ENCODE measurements at regions of chr9 and their contacts with region 1.

Region 1: GRCh38 chr9:99140685-99141314 is 35.9 kb downstream of the TGFBR1 start:
- DNase-seq: peak; percentile 36
- H3K4me3 ChIP-seq: no peak overlapping the region
- H3K27ac ChIP-seq: no peak overlapping the region
- H3K4me1 ChIP-seq: no peaks in the 10 kb centered on the region
- H3K27me3 ChIP-seq: no peaks in the 10 kb centered on the region
- CTCF ChIP-seq: peak; percentile 61 to 83 (median 72)
- POLR2A ChIP-seq: no peak

Region 2: DNA sequence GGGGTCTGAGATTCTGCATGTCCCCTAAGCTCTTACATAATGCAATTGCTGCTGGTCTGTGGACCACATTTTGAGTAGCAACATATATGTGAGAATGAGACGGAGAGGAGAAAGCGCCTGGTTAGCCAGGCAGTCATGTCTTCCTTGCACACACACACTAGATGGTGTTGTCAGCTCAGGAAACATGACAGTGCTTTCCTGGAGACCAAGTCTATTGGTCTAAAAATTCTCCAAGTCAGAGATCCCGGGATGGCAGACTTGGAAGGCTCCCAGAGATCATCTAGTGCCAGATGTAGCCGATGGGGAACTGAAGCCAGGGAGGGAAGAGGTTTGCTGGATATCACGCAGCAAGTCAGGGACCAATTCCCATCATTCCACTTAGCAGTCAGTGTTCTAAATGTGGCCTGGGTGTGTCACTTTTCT is 279.9 kb before region 1 on chr9:
- intact Hi-C with region 1: loop called (anchors 5 kb)
- DNase-seq: no peak
- H3K4me3 ChIP-seq: no peak overlapping the region
- H3K27ac ChIP-seq: peak overlapping the region in 1 of 2 donors; percentile 5
- H3K4me1 ChIP-seq: no peaks in the 10 kb centered on the region
- H3K27me3 ChIP-seq: no peaks in the 10 kb centered on the region
- CTCF ChIP-seq: peak in 2 of 4 experiments; percentile 23 to 46
- POLR2A ChIP-seq: no peak